ENCODE measurements at regions of chr15 and their contacts with region 1.

Region 1: GRCh38 chr15:89206908-89207331 is 14.5 kb downstream of the RLBP1 start:
- DNase-seq: peak; percentile 82
- H3K4me3 Mint-ChIP-seq: no peak overlapping the region
- H3K27ac Mint-ChIP-seq: no peak overlapping the region
- H3K4me1 Mint-ChIP-seq: peaks cover 33% of the 10 kb centered on the region
- H3K27me3 Mint-ChIP-seq: no peaks in the 10 kb centered on the region

Region 2: DNA sequence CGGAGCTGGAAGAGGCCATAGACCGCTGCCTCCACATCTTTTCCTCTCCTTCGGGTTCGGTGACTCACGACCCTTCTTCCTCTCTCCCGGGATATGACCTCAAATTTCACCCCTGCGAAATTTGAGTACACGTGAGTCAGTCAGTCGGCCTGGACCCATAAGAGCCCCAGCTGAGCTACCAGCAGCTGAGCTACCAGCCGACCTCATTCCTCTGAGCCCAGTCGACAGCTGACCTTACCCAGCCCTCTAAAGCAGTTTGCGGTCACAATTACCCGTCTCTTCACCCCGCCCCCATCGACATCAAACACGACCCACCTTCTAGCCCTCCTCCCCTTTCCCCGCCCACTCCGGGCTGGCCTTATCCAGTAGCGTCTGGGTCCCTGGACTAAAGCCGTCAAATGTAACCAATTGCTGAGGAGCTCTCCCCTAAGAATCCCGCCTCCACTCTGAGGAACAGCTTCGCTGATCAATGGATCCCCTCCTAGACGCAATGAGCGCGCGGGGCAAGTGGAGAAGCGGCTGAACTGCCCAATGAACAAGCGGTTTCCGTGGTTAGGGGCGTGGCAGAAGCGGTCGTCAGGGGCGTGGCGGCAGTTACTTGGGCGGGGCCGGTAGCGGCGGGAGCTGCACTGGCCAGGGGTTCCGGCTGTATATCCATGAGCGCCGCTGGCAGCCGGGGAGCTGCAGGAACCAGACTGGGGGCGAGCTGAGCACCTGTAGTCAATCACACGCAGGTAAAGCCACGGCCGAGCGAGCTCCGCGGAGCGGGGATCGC is 118.9 kb before region 1 on chr15 and contains the start of gene ABHD2:
- CTCF ChIA-PET with region 1: interaction called, 10 read pairs
- POLR2A ChIA-PET with region 1: no interaction called
- intact Hi-C with region 1: no loop called
- DNase-seq: peak; percentile 99
- H3K4me3 Mint-ChIP-seq: no peak within 1 kb of the TSS
- H3K27ac Mint-ChIP-seq: no peak within 1 kb of the TSS
- H3K4me1 Mint-ChIP-seq: peaks cover 36% of the 10 kb centered on the region
- H3K27me3 Mint-ChIP-seq: no peaks in the 10 kb centered on the region
- total RNA-seq, gene ABHD2: 36.0 to 38.5 TPM

Region 3: GRCh38 chr15:89177633-89178306 is 29.1 kb before region 1 on chr15:
- CTCF ChIA-PET with region 1: interaction called, 20 read pairs
- POLR2A ChIA-PET with region 1: no interaction called
- intact Hi-C with region 1: loop called (anchors 2 kb)
- DNase-seq: peak; percentile 77
- H3K4me3 Mint-ChIP-seq: no peak overlapping the region
- H3K27ac Mint-ChIP-seq: no peak overlapping the region
- H3K4me1 Mint-ChIP-seq: peaks cover 39% of the 10 kb centered on the region
- H3K27me3 Mint-ChIP-seq: no peaks in the 10 kb centered on the region

Region 4: DNA sequence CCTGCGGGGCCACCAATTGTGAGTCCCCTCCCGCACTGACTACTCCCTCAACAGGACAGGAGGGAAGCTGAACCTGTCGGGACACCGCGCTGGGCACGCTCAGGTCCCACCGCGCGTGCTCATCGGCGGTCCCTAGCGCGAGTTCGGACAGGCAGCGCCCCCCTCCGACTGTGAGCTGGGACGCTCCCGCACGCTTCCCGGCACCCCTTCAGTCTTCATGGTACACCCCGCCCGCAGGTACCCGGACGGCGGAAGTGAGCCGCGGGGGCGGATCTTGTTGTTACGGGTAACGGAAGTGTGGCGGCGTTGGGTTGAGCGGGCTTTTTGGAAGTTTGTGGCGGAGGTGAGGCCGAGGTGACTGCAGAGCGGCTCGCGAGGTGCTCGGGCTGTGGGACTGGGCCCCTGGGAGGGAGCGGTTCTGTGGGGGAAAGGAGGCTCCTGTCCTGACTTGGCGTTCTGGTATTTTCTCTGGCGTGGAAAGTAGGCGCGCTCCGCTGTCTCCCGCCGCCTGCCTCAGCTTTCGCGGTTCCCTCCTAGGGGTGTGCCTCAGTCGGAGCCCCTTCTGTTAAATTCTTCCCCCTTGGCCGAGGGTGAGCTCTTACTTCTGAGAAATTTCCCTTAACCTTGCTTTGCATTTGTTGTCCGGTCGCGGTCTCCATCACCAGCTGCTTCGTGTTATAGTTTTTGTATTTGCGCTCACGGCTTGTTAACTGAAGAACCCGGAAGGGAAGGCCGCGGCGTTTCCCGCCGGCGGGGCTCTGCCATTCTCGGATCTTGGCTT is 37.0 kb after region 1 on chr15 and contains the start of gene FANCI:
- CTCF ChIA-PET with region 1: interaction called, 70 read pairs
- POLR2A ChIA-PET with region 1: interaction called, 9 read pairs
- intact Hi-C with region 1: loop called (anchors 1 kb)
- DNase-seq: peak; percentile 98
- H3K4me3 Mint-ChIP-seq: peak within 1 kb of the TSS; percentile 96
- H3K27ac Mint-ChIP-seq: peak within 1 kb of the TSS; percentile 90
- H3K4me1 Mint-ChIP-seq: peaks cover 27% of the 10 kb centered on the region
- H3K27me3 Mint-ChIP-seq: no peaks in the 10 kb centered on the region
- total RNA-seq, gene FANCI: 208 to 213 TPM

Region 5: DNA sequence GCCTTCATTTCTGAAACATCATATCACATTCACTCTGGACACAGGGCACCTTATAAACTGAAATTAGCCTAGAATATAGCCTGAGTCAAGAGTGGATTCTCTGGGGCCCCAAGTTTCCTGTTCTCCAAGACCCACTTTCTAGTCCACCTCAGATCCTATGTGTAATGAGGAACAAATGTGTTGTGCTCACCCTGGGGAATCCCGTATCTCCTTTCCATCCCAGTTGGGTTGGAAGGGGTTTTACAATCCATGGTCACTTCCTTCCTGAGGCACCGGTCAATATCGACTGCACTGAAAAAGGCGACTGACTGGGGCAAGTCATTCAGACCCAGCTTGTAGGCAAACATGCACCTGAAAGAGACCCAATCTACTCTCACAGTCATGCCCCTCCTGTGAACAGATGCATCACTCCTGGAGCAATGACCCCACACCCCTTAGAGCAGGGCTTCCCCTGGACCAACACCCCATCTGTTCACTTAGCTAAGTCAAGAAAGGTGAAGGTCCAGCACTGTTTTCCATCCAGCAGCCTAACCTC is 110.3 kb after region 1 on chr15:
- CTCF ChIA-PET with region 1: interaction called, 18 read pairs
- POLR2A ChIA-PET with region 1: interaction called, 3 read pairs
- intact Hi-C with region 1: no loop called
- DNase-seq: peak; percentile 20
- H3K4me3 Mint-ChIP-seq: no peak overlapping the region
- H3K27ac Mint-ChIP-seq: peak overlapping the region; percentile 78
- H3K4me1 Mint-ChIP-seq: peaks cover 24% of the 10 kb centered on the region
- H3K27me3 Mint-ChIP-seq: no peaks in the 10 kb centered on the region

Region 6: GRCh38 chr15:89346516-89347231 is 139.8 kb after region 1 on chr15:
- CTCF ChIA-PET with region 1: no interaction called
- POLR2A ChIA-PET with region 1: no interaction called
- intact Hi-C with region 1: no loop called
- DNase-seq: no peak
- H3K4me3 Mint-ChIP-seq: no peak overlapping the region
- H3K27ac Mint-ChIP-seq: no peak overlapping the region
- H3K4me1 Mint-ChIP-seq: peaks cover 11% of the 10 kb centered on the region
- H3K27me3 Mint-ChIP-seq: peaks cover 8% of the 10 kb centered on the region

Region 7: DNA sequence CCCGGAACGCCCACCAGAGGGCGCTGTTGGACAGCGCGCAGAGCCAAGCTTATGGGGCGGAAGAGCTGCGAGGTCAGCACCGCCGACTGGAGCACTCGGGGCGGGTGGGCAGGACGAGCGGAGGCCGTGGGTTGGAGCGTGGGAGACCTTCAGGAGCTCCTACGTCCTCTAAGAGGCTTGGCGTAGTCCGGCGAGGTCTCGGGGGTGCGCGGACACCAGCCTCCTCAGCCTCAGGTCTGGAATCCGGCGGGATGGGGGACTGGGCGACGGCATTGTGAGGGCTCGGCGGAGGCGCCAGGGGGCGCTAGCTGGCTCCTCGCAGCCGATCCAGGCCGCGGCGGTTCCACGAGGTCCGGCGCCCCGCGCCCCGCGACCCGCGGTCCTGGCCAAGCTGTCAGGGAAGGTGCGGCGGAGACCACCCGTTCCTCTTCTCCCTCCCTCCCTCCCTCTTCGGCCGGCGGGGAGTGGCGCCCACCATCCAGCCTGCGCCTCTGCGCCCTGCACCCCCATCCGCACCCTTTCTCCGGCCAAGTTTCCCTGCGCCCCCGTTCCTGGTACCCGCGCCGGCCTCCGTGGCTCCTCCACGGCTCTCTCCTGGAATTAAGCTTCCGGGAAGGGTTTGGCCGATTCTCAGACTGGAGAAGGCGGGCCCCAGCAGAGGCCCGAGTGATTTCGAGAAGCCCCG is 152.0 kb after region 1 on chr15:
- CTCF ChIA-PET with region 1: interaction called, 43 read pairs
- POLR2A ChIA-PET with region 1: no interaction called
- intact Hi-C with region 1: no loop called
- DNase-seq: peak; percentile 89
- H3K4me3 Mint-ChIP-seq: peak overlapping the region; percentile 76
- H3K27ac Mint-ChIP-seq: no peak overlapping the region
- H3K4me1 Mint-ChIP-seq: peaks cover 5% of the 10 kb centered on the region
- H3K27me3 Mint-ChIP-seq: peaks cover 72% of the 10 kb centered on the region

Measured in activated CD4-positive, alpha-beta memory T cell treated with anti-CD3 and anti-CD28 coated beads for 36 hours (primary cell).